OCI-LY7 (cell line): ENCODE measurements at regions of chr7 and their contacts with region 1.

Region 1: DNA sequence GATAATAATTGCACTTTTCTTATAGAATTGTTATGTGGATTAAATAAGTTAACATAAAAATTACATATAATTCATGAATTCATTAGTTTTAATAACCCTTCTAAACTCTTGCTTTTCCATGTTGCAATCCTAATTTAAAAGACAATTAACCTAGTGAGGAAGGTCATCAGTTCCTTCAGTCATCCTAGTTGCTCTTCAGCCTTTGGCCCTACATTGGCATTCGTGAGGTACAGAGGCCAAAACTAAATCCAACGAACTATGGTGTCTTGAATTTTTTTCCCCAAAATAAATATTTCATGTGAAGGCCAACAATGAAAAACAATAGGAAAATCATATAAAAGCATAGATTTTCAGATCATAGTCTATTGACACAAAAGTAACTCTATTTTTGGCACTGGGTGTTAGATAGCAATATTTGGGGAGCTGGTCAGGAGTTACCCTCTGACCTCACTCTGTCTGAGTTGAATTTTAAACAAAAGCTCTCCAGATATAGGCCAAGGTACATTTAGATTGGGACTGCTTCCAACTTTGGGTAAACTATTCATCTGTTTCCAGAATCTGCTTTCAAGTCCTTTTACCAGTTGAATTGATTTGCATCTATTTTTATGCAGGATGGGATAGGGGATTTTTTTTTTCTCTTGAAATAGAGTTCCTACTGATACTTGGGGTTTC is 104.5 kb downstream of the SEM1 start:
- DNase-seq: no peak
- H3K4me3 ChIP-seq: no peak overlapping the region
- H3K27ac ChIP-seq: no peak overlapping the region
- H3K4me1 ChIP-seq: no peaks in the 10 kb centered on the region
- CTCF ChIP-seq: no peak

Region 2: DNA sequence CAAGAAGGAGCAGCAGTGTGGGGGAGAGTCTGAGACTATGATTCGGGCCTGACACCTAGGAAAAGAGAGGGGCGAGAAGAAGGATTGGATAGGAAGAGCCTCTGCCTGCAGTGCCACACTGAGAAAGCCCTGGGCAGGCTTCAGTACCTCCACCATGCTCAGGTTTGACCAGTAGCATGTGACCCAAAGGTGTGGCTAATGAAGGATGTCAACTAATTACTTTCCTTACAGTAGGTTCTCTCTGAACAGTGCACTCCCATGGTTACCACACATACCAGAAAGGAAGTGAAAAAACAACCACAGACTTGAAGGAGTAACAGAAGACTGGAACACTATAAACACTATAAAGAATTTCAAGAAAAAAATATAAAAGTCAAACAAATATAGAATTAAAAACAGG is 58.3 kb after region 1 on chr7:
- CTCF ChIA-PET with region 1: no interaction called
- POLR2A ChIA-PET with region 1: no interaction called
- intact Hi-C with region 1: loop called (anchors 10 kb)
- DNase-seq: no peak
- H3K4me3 ChIP-seq: no peak overlapping the region
- H3K27ac ChIP-seq: no peak overlapping the region
- H3K4me1 ChIP-seq: no peaks in the 10 kb centered on the region
- CTCF ChIP-seq: no peak